Transverse colon (tissue), 4 donors: ENCODE measurements at regions of chr3 and their contacts with region 1.

Region 1: DNA sequence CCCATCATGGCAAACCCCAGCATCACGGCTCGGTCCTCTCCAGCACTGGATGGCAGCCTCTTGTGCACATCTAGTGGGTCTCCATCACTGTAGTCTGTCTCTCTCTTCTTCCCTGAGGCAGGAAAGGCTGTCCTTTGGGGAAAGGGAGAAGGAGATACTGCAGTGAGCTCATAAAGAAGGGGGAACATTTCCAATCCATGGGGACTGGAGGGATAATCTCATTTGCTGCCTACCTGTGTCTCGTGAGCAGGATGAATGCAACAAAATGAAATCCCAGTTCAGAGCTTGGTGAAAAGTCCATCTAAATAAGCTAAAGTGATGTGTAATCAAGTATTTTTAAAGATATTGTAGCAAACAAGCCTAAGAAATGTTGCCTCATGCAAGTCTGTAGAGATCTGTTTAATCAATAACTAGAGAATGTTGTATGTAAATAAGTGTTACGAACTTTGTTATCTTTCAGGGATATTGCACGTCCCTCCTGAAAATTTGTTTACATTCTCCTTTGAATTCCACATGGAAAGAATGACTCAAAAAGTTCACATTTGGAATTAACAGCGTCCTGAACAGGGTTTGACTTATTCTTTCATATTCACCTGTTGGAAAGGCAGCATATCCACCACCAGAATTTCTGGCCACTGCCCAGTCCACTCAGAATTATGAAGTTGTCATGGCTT is at the start of gene KCNMB3:
- DNase-seq: no peak
- H3K4me3 ChIP-seq: no peak within 1 kb of the TSS
- H3K27ac ChIP-seq: no peak within 1 kb of the TSS
- H3K4me1 ChIP-seq: no peaks in the 10 kb centered on the region
- H3K27me3 ChIP-seq: no peaks in the 10 kb centered on the region
- CTCF ChIP-seq: no peak
- EP300 ChIP-seq: no peak
- POLR2A ChIP-seq: no peak
- total RNA-seq, gene KCNMB3: 1.1 to 6.8 (median 2.7) TPM

Region 2: GRCh38 chr3:179292450-179292849 is 41.5 kb after region 1 on chr3:
- in situ Hi-C with region 1: no loop called
- intact Hi-C with region 1: loop called (anchors 1 kb)
- DNase-seq: no peak
- H3K4me3 ChIP-seq: no peak overlapping the region
- H3K27ac ChIP-seq: no peak overlapping the region
- H3K4me1 ChIP-seq: no peaks in the 10 kb centered on the region
- H3K27me3 ChIP-seq: no peaks in the 10 kb centered on the region
- CTCF ChIP-seq: no peak
- EP300 ChIP-seq: no peak
- POLR2A ChIP-seq: no peak

Region 3: DNA sequence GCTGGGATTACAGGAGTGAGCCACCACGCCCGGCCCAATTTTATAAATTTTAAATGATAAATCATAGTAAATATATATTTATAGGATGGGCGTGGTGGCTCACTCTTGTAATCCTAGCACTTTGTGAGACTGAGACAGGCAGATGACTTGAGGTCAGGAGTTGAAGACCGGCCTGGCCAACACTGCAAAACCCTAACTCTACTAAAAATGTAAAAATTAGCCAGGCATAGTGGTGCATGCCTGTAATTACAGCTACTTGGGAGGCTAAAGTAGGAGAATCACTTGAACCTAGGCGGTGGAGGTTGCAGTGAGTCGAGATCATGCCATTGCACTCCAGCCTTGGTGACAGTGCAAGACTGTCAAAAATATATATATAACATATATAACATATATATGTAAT is 123.0 kb after region 1 on chr3:
- in situ Hi-C with region 1: no loop called
- intact Hi-C with region 1: no loop called
- DNase-seq: no peak
- H3K4me3 ChIP-seq: no peak overlapping the region
- H3K27ac ChIP-seq: no peak overlapping the region
- H3K4me1 ChIP-seq: no peaks in the 10 kb centered on the region
- H3K27me3 ChIP-seq: no peaks in the 10 kb centered on the region
- CTCF ChIP-seq: no peak
- EP300 ChIP-seq: no peak
- POLR2A ChIP-seq: no peak

Region 4: GRCh38 chr3:179512378-179512777 is 261.4 kb after region 1 on chr3:
- in situ Hi-C with region 1: no loop called
- intact Hi-C with region 1: no loop called
- DNase-seq: no peak
- H3K4me3 ChIP-seq: no peak overlapping the region
- H3K27ac ChIP-seq: no peak overlapping the region
- H3K4me1 ChIP-seq: no peaks in the 10 kb centered on the region
- H3K27me3 ChIP-seq: no peaks in the 10 kb centered on the region
- CTCF ChIP-seq: no peak
- EP300 ChIP-seq: no peak
- POLR2A ChIP-seq: no peak